GM10248 (cell line): ENCODE measurements at regions of chr20 and their contacts with region 1.

Region 1: GRCh38 chr20:330233-331149 is 5.1 kb downstream of the SOX12 start:
- DNase-seq: peak; percentile 80
- CTCF ChIP-seq: peak; percentile 85

Region 2: DNA sequence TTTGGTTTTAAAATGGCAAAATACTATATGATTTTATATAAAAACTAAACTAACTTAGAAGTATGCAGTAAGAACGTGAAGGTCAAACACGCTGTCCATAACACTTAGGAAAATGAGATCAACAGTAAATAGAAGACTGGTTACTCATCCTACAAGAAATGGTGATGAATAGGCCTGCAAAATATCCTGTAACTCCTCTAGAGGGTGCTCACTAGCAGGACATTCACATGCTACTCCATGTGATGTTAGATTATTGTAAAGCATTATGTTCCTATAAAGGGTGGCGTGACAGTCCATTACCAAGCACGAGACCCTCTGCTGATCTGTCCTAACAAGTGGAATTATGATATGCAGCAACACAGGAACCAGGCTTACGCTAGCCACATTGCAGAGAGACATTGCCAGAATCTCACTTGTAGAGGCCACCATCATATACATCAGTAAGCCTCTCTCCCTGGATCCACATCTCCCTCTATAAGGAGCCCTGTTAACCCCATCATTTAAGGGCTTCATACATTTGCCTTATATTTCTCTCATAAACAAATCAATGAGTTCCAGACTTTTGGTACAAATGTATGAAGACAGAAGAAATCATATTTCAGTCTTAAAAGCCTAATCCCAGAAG is 121.4 kb before region 1 on chr20:
- CTCF ChIA-PET with region 1: interaction called, 16 read pairs
- POLR2A ChIA-PET with region 1: no interaction called
- DNase-seq: peak; percentile 28
- CTCF ChIP-seq: peak; percentile 60

Region 3: GRCh38 chr20:266596-267562 is 63.6 kb before region 1 on chr20:
- CTCF ChIA-PET with region 1: interaction called, 22 read pairs
- POLR2A ChIA-PET with region 1: no interaction called
- DNase-seq: peak; percentile 91
- CTCF ChIP-seq: peak; percentile 94

Region 4: GRCh38 chr20:341682-342081 is 11.2 kb after region 1 on chr20:
- CTCF ChIA-PET with region 1: interaction called, 83 read pairs
- POLR2A ChIA-PET with region 1: no interaction called
- DNase-seq: no peak
- CTCF ChIP-seq: no peak

Region 5: DNA sequence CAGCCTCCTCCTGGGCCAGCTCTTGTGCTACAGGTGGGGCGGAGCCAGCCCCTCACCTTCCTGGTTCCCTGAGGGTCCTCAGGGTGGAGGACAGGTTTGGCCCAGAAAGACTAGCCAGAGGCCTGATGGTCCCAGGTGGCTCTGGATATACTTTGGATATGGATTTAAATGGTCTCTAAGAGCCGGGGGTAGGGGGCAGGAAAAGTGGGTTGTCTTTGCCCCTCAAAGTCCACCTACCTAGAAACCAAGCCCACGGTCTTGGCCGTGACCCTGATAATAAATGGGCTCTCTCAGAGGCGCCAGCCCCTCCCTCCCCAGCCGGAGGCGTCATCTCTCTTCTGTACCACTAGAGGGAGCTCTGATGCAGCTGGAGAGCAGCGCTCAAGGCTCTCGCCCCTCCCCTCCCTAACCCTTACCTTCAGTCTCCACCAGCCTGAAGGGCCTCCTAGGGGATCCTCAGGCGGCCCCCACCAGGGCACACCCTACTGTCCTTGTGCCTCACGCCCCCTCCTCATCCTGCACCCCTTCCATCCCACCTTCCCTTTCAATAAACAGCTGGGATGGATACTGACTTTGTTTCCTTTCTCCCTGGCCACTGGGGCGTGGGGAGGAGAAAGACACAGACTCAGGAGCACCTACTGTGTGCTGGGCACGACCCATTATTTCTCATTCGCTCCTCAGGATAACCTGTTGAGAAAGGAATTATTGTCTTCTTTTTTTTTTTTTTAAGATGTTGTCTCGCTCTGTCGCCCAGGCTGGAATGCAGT is 24.0 kb after region 1 on chr20:
- CTCF ChIA-PET with region 1: interaction called, 37 read pairs
- POLR2A ChIA-PET with region 1: no interaction called
- DNase-seq: peak; percentile 91
- CTCF ChIP-seq: peak; percentile 95

Region 6: GRCh38 chr20:588932-589672 is 258.6 kb after region 1 on chr20:
- CTCF ChIA-PET with region 1: no interaction called
- POLR2A ChIA-PET with region 1: no interaction called
- DNase-seq: peak; percentile 73
- CTCF ChIP-seq: peak; percentile 30